Calu3 (cell line): ENCODE measurements at regions of chr14 and their contacts with region 1.

Region 1: DNA sequence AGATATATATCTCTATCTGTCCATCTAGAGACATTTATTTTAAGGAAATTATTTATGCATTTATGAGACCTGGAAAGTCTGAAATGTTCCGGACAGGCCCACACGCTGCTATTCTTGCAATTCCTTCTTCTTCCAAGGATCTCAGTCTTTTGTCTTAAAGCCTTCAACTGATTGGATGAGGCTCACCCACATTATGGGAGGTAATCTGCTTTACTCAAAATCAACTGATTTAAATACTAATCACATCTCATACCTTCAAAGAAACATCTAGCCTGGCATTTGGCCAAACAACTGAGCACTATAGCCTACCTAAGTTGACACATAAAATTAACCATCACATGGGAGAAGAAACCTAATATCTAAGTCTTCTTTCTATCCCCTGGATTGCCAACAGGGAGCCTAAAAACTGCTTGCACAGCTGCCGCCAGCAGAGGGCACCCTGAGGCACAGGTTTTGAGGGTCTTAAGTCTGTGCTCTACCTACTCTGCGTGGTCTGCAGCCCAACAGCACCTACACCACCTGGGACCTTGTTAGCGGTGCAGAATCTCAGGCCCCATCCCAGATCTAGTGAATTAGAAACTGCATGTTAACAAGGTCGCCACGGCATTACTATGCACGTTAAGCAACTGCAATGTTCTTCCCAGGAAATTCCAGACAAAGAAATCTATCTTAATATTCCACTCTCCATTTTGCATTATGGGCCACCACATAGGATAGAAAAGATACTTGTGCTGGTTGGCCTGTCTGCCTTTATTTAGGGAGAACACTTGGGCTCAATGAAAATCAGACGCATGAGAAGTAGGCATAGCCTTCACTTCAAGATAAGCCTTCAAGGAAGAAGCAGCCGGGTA is 249.7 kb downstream of the FOXG1 start:
- DNase-seq: peak; percentile 65
- H3K4me3 Mint-ChIP-seq: no peak overlapping the region
- H3K27ac Mint-ChIP-seq: no peak overlapping the region
- H3K4me1 Mint-ChIP-seq: no peaks in the 10 kb centered on the region
- H3K27me3 Mint-ChIP-seq: no peaks in the 10 kb centered on the region
- CTCF ChIP-seq: peak; percentile 74

Region 2: GRCh38 chr14:29205658-29206057 is 189.4 kb after region 1 on chr14:
- CTCF ChIA-PET with region 1: no interaction called
- intact Hi-C with region 1: no loop called
- DNase-seq: no peak
- H3K4me3 Mint-ChIP-seq: no peak overlapping the region
- H3K27ac Mint-ChIP-seq: no peak overlapping the region
- H3K4me1 Mint-ChIP-seq: no peaks in the 10 kb centered on the region
- H3K27me3 Mint-ChIP-seq: no peaks in the 10 kb centered on the region
- CTCF ChIP-seq: no peak

Region 3: DNA sequence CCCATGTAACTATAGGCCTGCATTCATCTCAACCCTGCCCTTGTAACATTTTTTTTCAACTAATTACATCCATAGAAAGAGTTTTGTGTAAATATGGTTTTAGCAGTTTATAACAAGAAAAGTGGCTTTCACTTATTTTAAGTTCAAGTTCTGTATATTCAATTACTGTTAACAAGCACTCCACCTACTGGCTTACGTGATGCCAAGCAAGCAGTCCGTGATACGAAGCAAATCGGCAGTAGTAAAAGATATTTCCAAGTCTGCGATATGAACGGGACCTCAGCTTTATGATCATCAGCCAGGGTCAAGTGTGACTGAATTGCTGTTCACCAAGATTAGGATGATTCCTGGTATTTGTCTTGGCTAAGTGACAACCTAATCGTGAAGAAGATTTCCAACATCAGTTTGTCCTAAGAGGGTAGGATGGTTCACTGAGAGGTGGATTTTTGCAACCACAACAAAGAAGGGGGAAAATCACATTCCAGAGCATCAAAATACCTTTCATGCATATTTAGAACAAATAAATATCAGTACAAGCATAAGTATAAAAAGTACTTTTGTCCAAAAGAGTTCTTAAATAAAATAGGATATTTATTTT is 206.5 kb after region 1 on chr14:
- CTCF ChIA-PET with region 1: no interaction called
- intact Hi-C with region 1: loop called (anchors 1 kb)
- DNase-seq: peak; percentile 7
- H3K4me3 Mint-ChIP-seq: no peak overlapping the region
- H3K27ac Mint-ChIP-seq: no peak overlapping the region
- H3K4me1 Mint-ChIP-seq: no peaks in the 10 kb centered on the region
- H3K27me3 Mint-ChIP-seq: peaks cover 12% of the 10 kb centered on the region
- CTCF ChIP-seq: peak; percentile 27

Region 4: GRCh38 chr14:29521526-29522137 is 505.4 kb after region 1 on chr14:
- CTCF ChIA-PET with region 1: interaction called, 6 read pairs
- intact Hi-C with region 1: loop called (anchors 2 kb)
- DNase-seq: peak; percentile 41
- H3K4me3 Mint-ChIP-seq: no peak overlapping the region
- H3K27ac Mint-ChIP-seq: no peak overlapping the region
- H3K4me1 Mint-ChIP-seq: no peaks in the 10 kb centered on the region
- H3K27me3 Mint-ChIP-seq: no peaks in the 10 kb centered on the region
- CTCF ChIP-seq: peak; percentile 28

Region 5: GRCh38 chr14:29536886-29537511 is 520.7 kb after region 1 on chr14:
- CTCF ChIA-PET with region 1: no interaction called
- intact Hi-C with region 1: loop called (anchors 5 kb)
- DNase-seq: peak; percentile 4
- H3K4me3 Mint-ChIP-seq: no peak overlapping the region
- H3K27ac Mint-ChIP-seq: no peak overlapping the region
- H3K4me1 Mint-ChIP-seq: no peaks in the 10 kb centered on the region
- H3K27me3 Mint-ChIP-seq: peaks cover 11% of the 10 kb centered on the region
- CTCF ChIP-seq: peak; percentile 38

Region 6: DNA sequence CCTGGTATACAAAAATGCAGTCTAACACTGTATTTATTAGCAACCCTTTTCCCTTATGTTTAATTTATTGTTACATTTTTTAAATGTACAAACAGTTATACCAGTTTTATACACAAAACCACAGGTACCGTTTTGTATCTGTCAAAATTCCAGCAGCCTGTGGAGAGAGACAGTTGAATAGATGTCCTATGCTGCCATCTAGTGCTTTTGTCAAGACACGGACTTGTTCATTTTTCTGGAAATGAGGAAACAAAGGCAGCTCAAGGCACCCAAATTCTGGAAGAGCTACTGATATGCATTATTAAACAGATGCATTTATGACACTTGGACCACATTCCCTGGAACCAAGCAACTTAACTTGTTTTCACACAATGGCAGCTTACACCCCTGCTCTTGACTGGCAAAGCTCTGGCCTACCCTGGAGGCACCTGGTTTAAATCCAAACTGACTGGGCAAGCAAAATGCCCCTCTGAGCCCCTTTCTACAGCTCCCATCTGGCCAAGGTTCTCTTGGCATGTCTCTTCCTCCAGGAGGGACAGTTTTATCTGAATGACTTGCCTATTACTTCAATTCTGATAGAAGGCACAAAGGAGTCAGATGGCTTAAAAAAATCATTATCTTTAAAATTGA is 1198.3 kb after region 1 on chr14:
- CTCF ChIA-PET with region 1: no interaction called
- intact Hi-C with region 1: loop called (anchors 10 kb)
- DNase-seq: peak; percentile 32
- H3K4me3 Mint-ChIP-seq: no peak overlapping the region
- H3K27ac Mint-ChIP-seq: no peak overlapping the region
- H3K4me1 Mint-ChIP-seq: no peaks in the 10 kb centered on the region
- H3K27me3 Mint-ChIP-seq: no peaks in the 10 kb centered on the region
- CTCF ChIP-seq: peak; percentile 63